OCI-LY7 (cell line): ENCODE measurements at regions of chr11 and their contacts with region 1.

Region 1: GRCh38 chr11:118928108-118928870 is 2.6 kb upstream of the BCL9L start:
- DNase-seq: peak; percentile 91
- H3K4me3 ChIP-seq: peak overlapping the region; percentile 71
- H3K27ac ChIP-seq: peak overlapping the region; percentile 76
- H3K4me1 ChIP-seq: peaks cover 44% of the 10 kb centered on the region
- CTCF ChIP-seq: peak; percentile 96

Region 2: DNA sequence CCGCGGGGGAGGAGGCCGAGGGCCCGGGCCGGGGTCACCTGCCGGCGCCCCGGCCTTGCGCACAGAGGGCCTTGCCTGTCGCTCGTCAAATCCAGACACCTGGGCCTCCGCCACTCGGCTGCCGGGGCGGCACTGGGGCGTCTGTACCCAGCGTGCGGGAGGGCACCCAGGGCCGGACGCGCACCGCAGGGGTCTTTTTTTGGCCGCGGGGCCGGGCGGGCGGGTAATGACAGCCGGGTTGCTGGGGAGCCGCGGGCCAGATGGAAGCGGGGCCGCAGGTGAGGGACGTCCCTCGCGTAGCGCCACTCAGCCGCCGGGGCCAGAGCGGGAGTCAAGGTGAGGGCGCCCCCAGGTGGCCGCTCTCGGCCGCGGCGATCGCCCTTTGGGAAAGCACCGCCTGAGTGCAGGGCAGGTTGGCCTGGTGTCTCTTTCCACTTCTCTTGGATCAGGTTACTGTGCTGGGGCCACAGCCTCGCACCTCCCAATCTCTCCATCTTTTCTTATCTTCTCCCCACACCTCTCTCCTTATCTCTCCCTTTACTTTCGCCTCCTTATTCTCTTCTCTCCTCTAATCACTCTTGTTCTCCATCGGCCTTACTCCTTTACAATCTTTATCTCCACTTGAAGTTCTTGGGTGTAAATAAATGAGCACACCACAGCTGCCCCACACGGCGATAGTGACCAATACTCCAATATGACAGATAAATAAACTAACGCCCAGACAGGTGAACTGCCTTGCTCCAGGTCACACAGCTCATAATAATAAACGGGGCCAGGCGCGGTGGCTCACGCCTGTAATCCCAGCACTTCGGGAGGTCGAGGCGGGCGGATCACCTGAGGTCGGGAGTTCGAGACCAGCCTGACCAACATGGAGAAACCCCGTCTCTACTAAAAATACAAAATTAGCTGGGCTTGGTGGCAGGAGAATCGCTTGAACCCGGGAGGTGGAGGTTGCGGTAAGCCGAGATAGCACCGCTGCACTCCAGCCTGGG is 317.2 kb before region 1 on chr11:
- CTCF ChIA-PET with region 1: no interaction called
- POLR2A ChIA-PET with region 1: no interaction called
- intact Hi-C with region 1: no loop called
- DNase-seq: peak; percentile 71
- H3K4me3 ChIP-seq: no peak overlapping the region
- H3K27ac ChIP-seq: no peak overlapping the region
- H3K4me1 ChIP-seq: peaks cover 22% of the 10 kb centered on the region
- CTCF ChIP-seq: peak; percentile 76

Region 3: DNA sequence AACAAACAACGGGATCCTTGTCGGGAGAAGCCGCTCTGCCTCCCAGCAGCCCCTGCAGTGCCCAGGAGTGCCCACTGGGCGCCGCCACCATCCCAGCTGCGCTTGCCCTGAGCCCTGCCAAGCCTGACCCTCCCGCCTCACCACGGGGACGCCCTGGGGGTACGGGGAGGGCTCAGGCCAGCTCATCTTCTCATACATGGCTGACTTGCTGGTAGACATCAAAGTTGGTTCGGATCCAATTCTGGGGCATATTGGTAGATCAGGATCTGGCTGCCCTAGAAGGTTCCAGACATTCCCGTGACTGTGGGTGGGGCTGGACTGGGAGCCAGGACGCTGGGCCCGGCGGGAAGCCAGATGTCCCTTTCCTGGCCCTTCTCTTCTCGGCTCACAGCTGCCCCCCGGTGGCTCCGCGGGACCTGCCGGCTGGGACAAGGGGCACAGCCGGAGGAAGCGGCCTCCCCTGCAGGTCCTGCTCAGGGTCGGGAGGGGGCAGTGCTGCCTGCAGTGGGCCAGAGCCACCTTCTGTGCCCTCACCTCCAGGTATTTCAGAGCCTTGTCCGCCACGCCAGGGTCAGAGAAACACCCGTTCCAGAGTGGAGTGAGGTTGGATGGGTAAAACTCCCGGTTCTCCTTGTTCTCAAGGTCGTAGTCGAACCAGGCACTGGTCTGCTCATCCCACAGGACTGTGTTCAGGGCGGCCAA is 238.3 kb before region 1 on chr11:
- CTCF ChIA-PET with region 1: no interaction called
- POLR2A ChIA-PET with region 1: no interaction called
- intact Hi-C with region 1: loop called (anchors 1 kb)
- DNase-seq: peak; percentile 91
- H3K4me3 ChIP-seq: peak overlapping the region; percentile 46
- H3K27ac ChIP-seq: no peak overlapping the region
- H3K4me1 ChIP-seq: peaks cover 7% of the 10 kb centered on the region
- CTCF ChIP-seq: peak; percentile 98

Region 4: GRCh38 chr11:118744046-118744445 is 184.2 kb before region 1 on chr11:
- CTCF ChIA-PET with region 1: interaction called, 13 read pairs
- POLR2A ChIA-PET with region 1: no interaction called
- intact Hi-C with region 1: no loop called
- DNase-seq: no peak
- H3K4me3 ChIP-seq: no peak overlapping the region
- H3K27ac ChIP-seq: no peak overlapping the region
- H3K4me1 ChIP-seq: no peaks in the 10 kb centered on the region
- CTCF ChIP-seq: no peak

Region 5: DNA sequence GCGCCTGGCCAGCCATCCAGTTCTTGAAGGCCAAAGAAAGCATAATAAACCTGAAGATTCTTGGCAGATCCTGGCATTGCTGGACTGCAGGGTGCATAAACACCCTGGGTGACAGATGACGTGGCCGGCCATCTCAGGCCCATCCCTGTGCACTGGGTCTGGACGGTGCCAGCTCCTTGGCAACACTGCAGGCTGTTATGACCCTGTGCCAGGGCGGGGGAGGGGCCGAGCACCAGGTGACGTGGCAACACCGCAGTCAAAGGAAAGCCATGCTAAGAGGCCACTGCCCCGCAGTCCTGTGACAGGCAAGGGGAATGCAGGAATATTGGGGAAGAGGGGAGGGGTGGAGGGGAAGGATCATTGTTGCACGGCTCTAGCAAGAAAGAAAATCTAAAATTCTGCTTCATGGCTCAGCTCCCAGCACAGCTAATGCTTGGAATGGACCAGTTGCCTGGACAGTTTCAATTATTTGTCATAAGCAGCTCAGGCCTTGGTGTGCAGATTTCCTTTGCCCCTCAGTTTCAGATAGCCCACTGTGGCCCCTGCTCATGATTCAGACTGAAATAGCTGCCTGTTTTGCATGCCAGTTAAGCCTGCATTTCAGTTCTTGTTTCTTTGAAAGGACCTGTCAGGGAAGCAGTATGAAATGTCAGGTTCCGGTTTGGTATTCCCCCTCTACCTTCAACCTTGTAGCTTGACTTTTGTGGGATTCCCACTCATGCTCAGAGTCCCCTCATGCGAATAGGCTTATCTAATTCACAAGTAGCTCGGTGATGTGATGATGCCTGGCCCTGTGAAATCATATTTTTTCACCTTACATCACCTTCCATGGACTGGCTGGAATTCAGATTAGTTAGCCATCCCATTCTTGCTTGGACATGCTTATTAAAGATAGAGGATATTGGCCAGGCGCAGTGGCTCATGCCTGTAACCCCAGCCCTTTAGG is 107.6 kb before region 1 on chr11:
- CTCF ChIA-PET with region 1: no interaction called
- POLR2A ChIA-PET with region 1: no interaction called
- intact Hi-C with region 1: no loop called
- DNase-seq: peak; percentile 91
- H3K4me3 ChIP-seq: peak overlapping the region; percentile 61
- H3K27ac ChIP-seq: peak overlapping the region; percentile 80
- H3K4me1 ChIP-seq: peaks cover 61% of the 10 kb centered on the region
- CTCF ChIP-seq: no peak

Region 6: GRCh38 chr11:118907051-118908042 is 20.9 kb before region 1 on chr11:
- CTCF ChIA-PET with region 1: interaction called, 31 read pairs
- POLR2A ChIA-PET with region 1: interaction called, 25 read pairs
- intact Hi-C with region 1: loop called (anchors 1 kb)
- DNase-seq: peak; percentile 87
- H3K4me3 ChIP-seq: no peak overlapping the region
- H3K27ac ChIP-seq: no peak overlapping the region
- H3K4me1 ChIP-seq: peaks cover 47% of the 10 kb centered on the region
- CTCF ChIP-seq: peak; percentile 96

Region 7: DNA sequence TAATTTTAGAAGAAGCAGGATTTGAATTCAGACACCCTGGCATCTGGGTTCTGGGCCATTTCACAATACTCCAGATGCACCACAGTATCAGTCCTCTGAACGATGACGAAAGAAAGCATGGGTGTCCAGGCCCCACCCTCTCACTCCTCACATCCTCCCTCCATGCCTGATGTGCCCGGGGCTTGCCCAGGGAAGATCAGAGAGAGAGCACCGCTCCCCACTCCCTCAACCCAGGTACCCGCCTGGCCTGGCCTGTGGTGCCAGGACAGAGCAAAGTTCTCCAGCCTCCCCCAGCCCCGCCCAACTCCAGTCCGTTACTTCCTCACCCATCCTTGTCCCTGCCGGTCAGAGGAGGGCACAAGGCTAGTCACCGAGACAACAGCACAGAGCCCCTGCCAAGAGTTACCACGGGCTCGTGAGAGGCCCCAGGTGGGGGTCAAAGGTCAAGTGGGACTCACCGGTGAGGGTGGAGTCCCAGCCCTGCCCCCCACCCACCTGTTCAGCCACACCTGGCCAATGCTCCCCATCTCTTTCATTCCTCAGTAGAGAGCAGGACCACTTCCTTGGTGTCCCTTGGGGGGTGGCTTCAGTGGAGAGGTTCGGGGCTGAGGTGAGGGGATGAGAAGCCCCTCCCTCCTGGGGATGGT is 10.7 kb before region 1 on chr11:
- CTCF ChIA-PET with region 1: interaction called, 31 read pairs
- POLR2A ChIA-PET with region 1: interaction called, 25 read pairs
- intact Hi-C with region 1: loop called (anchors 1 kb)
- DNase-seq: no peak
- H3K4me3 ChIP-seq: no peak overlapping the region
- H3K27ac ChIP-seq: peak overlapping the region; percentile 0
- H3K4me1 ChIP-seq: peaks cover 88% of the 10 kb centered on the region
- CTCF ChIP-seq: no peak

Region 8: DNA sequence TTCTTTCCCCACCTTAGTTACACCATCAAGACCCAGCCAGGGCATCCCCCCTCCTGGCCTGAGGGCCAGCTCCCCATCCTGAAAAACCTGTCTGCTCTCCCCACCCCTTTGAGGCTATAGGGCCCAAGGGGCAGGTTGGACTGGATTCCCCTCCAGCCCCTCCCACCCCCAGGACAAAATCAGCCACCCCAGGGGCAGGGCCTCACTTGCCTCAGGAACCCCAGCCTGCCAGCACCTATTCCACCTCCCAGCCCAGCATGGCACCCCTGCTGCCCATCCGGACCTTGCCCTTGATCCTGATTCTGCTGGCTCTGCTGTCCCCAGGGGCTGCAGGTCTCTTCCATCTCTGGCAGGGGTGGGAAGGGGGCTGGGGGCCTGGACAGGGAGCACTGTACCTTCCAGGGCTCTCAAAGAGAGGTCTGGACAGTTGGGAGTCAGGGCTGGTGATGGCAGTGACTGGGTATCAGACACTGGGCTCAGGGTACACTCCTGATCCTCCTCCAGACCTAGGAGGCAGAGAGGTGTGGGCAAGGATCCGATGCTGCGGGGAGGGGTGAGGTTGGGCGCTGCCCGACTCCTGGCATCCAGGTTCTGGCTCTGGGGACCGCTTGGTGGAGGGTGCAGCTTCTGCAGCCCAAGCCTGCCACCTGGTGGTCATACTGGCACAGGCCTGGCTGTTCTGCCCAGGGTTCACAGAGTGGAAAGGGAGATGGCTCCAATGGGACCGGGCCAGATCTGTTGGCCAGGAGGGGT is 28.0 kb after region 1 on chr11 and contains the start of gene UPK2:
- CTCF ChIA-PET with region 1: no interaction called
- POLR2A ChIA-PET with region 1: no interaction called
- intact Hi-C with region 1: loop called (anchors 1 kb)
- DNase-seq: peak; percentile 86
- H3K4me3 ChIP-seq: no peak within 1 kb of the TSS
- H3K27ac ChIP-seq: no peak within 1 kb of the TSS
- H3K4me1 ChIP-seq: no peaks in the 10 kb centered on the region
- CTCF ChIP-seq: peak; percentile 94
- total RNA-seq, gene UPK2: 0.28 TPM in 1 of 2 replicates, not detected in the other